Right cardiac atrium (tissue), 5 donors: ENCODE measurements at regions of chr14 and their contacts with region 1.

Region 1: GRCh38 chr14:59055439-59056045 is 132.9 kb upstream of the DAAM1 start:
- DNase-seq: no peak
- ATAC-seq: peak; percentile 62 to 76
- H3K4me3 ChIP-seq: no peak overlapping the region
- H3K27ac ChIP-seq: no peak overlapping the region
- H3K4me1 ChIP-seq: no peaks in the 10 kb centered on the region
- H3K27me3 ChIP-seq: no peaks in the 10 kb centered on the region

Region 2: DNA sequence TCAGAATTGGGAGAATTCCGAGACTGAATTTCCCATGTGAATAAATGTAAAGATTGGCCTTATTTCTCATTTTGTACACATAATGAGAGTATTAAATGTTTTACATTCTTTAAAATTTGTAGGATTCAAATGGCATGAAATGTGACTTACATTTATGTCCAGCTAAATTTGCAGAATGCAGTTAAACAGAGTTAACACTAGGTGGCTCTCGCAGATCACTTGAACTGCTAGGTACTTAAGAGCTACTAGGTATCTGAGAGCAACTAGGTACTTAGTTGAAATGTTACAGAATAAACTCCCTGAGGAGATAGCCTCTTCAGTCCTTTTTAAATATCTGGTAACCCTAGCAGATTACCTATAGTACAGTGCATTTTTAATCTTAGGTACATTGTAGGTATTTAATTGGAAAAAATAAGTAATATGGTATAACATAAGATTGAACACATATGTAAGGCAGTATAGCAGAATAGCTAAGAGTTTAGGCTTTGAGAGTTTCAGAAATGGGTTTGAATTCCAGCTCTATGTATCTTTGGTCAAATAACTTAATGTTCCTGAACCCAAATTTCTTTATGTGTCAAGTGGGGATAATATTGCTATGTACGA is 554.2 kb before region 1 on chr14:
- intact Hi-C with region 1: loop called in 2 of 4 experiments (anchors 2 to 5 kb)
- DNase-seq: no peak
- ATAC-seq: peak; percentile 45 to 63
- H3K4me3 ChIP-seq: no peak overlapping the region
- H3K27ac ChIP-seq: no peak overlapping the region
- H3K4me1 ChIP-seq: no peaks in the 10 kb centered on the region
- H3K27me3 ChIP-seq: no peaks in the 10 kb centered on the region

Region 3: DNA sequence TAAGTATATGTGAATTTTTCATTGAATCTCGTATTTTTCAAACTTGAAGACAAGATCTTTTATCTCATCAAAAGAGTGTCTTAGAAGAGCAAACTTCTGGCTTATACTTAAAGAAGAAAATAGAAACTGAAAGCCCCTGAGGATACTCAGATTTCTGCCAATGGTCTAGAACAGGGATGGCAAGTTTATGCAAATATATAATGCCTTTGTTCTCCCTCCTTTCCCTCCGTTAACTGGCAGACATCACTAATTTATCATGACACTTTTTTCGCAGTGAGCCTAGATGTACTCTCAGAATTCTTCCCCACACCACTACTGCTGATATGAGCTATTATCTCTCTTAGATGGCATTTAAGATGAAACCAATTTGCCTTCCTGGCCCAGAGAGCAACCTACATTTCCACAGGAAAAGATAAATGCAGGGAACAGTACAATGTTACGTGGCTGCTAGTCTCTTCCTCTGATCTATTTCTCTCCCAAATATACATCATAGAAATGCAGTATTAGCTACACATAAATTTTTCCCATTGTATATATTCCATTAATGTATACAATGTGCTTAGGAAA is 92.9 kb after region 1 on chr14:
- intact Hi-C with region 1: no loop called
- DNase-seq: no peak
- ATAC-seq: no peak
- H3K4me3 ChIP-seq: no peak overlapping the region
- H3K27ac ChIP-seq: no peak overlapping the region
- H3K4me1 ChIP-seq: no peaks in the 10 kb centered on the region
- H3K27me3 ChIP-seq: no peaks in the 10 kb centered on the region